ENCODE measurements at regions of chr1 and their contacts with region 1.

Region 1: DNA sequence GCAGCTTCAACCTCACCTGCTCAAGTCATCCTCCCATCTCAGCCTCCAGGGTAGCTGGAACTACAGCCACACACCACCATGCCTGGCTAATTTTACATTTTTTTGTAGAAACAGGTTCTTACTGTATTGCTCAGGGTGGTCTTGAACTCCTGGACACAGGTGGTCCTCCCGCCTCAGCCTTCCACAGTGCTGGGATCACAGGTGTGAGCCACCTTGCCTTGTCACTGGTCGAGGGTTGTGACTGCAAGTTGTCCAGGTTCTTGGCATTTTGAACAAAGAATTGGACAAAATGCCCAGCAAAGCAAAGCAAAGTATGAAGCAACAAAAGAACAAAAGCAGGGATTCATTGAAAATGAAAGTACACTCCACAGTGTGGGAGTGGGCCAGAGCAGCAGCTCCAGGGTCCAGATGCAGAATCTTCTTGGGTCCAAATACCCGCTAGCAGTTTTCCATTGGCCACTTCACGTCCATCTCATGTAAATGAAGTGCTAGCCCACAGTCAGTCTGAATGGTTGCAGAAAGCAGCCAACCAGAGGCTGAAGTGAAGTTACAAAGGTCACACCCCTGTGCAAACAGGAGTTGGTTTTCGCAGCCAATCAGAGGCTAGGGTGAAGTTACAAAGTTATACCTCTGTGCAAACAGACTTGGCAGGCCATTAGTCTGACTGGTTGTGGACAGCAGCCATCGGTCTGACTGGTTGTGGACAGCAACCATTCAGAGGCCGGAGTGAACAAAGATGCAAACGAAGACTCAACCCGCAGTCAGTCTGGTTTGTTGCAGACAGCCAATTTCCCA is 109.5 kb upstream of the KIF26B start:
- DNase-seq: no peak
- ATAC-seq: no peak
- H3K4me3 ChIP-seq: no peak overlapping the region
- H3K4me3 Mint-ChIP-seq: no peak overlapping the region
- H3K27ac ChIP-seq: no peak overlapping the region
- H3K27ac Mint-ChIP-seq: no peak overlapping the region
- H3K4me1 ChIP-seq: no peaks in the 10 kb centered on the region
- H3K4me1 Mint-ChIP-seq: peaks cover 2% of the 10 kb centered on the region
- H3K27me3 ChIP-seq: no peaks in the 10 kb centered on the region
- H3K27me3 Mint-ChIP-seq: no peaks in the 10 kb centered on the region
- CTCF ChIP-seq: no peak

Region 2: GRCh38 chr1:244652699-244653466 is 392.4 kb before region 1 on chr1 and contains the start of gene DESI2:
- CTCF ChIA-PET with region 1: interaction called, 4 read pairs
- POLR2A ChIA-PET with region 1: no interaction called
- intact Hi-C with region 1: loop called in 1 of 2 experiments (anchors 2 kb)
- DNase-seq: peak; percentile 95 to 100 (median 97)
- ATAC-seq: peak; percentile 92
- H3K4me3 ChIP-seq: peak within 1 kb of the TSS; percentile 67 to 95
- H3K4me3 Mint-ChIP-seq: no peak within 1 kb of the TSS
- H3K27ac ChIP-seq: peak within 1 kb of the TSS; percentile 68 to 73
- H3K27ac Mint-ChIP-seq: peak within 1 kb of the TSS; percentile 86
- H3K4me1 ChIP-seq: peaks cover 22% of the 10 kb centered on the region
- H3K4me1 Mint-ChIP-seq: peaks cover 26% of the 10 kb centered on the region
- H3K27me3 ChIP-seq: no peaks in the 10 kb centered on the region
- H3K27me3 Mint-ChIP-seq: no peaks in the 10 kb centered on the region
- CTCF ChIP-seq: peak; percentile 39
- total RNA-seq, gene DESI2: 14.5 to 16.2 TPM

Region 3: GRCh38 chr1:244864253-244865027 is 180.8 kb before region 1 on chr1 and contains the start of gene HNRNPU:
- CTCF ChIA-PET with region 1: interaction called, 11 read pairs
- POLR2A ChIA-PET with region 1: interaction called, 6 read pairs
- intact Hi-C with region 1: loop called (anchors 2 kb)
- DNase-seq: peak; percentile 91 to 99 (median 96)
- ATAC-seq: peak; percentile 63
- H3K4me3 ChIP-seq: peak within 1 kb of the TSS; percentile 85 to 88
- H3K4me3 Mint-ChIP-seq: peak within 1 kb of the TSS; percentile 94
- H3K27ac ChIP-seq: peak within 1 kb of the TSS; percentile 91 to 94
- H3K27ac Mint-ChIP-seq: peak within 1 kb of the TSS; percentile 98
- H3K4me1 ChIP-seq: peaks cover 34% of the 10 kb centered on the region
- H3K4me1 Mint-ChIP-seq: peaks cover 45% of the 10 kb centered on the region
- H3K27me3 ChIP-seq: no peaks in the 10 kb centered on the region
- H3K27me3 Mint-ChIP-seq: no peaks in the 10 kb centered on the region
- CTCF ChIP-seq: no peak
- total RNA-seq, gene HNRNPU: 411 to 415 TPM

Region 4: DNA sequence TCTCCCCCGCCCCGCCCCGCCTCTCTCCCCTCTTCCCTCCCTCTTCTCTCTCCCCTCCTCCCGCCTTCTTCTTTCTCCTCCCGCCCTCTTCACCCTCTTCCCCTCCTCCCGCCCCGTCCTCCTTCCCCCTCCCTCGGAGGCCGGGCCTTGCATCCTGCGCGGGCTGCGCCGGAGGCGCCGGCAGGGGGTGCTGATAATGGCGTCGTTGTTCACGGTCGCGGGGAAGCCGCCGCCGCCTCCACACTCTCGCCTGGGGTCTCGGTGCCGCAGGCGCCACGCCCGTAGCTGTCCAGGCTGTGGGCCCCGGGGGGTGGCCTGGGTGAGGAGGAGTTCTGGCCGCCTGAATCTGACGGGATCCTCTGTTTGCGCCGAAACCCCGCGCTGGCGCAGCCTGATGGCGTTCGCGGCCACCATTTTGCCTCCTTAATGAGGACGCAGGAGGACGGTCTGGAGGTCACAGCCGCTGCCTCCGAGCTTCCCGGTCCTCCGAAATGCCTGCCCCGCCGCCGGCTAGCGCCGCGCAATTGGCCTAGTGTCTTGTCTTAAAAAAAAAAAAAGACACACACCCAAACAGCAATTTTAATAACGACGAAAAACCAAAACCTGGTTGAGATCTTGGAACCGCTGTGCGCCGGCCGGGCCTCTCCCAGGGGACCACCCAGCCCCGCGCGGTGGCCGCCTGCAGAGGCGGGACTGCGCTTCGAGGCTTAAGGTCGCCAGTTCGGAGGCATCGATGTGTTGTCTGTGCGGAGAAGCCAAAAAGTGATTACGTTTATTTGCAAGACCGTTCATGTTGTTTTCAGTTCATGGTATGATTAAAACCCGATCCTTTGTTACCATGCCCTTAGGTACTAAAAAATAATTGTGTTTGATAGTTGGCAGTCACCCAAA is 74.4 kb before region 1 on chr1:
- CTCF ChIA-PET with region 1: interaction called, 7 read pairs
- POLR2A ChIA-PET with region 1: interaction called, 6 read pairs
- intact Hi-C with region 1: loop called (anchors 2 to 5 kb)
- DNase-seq: peak; percentile 86 to 97 (median 93)
- ATAC-seq: peak; percentile 80
- H3K4me3 ChIP-seq: peak overlapping the region; percentile 68 to 70
- H3K4me3 Mint-ChIP-seq: peak overlapping the region; percentile 97
- H3K27ac ChIP-seq: peak overlapping the region; percentile 99 to 100
- H3K27ac Mint-ChIP-seq: peak overlapping the region; percentile 98
- H3K4me1 ChIP-seq: peaks cover 5% of the 10 kb centered on the region
- H3K4me1 Mint-ChIP-seq: peaks cover 19% of the 10 kb centered on the region
- H3K27me3 ChIP-seq: no peaks in the 10 kb centered on the region
- H3K27me3 Mint-ChIP-seq: no peaks in the 10 kb centered on the region
- CTCF ChIP-seq: peak; percentile 54

Region 5: DNA sequence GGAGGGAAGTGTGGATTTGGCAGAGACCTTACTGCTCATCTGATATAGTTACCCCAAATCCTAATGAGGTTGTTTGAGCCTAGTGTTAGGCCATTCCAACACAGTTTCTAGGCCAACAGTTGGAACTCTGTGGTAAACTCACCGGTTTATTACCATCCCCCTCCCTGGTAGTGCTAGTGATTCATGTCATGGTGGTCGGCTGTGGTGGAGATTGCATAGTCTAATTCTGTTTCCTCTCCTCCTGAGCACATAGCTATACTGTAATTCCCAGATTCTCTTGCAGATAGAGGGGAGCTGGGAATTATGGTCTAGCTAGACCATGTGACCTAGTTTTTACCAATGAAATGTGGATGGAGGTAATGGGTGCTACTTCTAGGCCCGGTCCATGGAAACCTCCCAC is 14.2 kb before region 1 on chr1:
- CTCF ChIA-PET with region 1: interaction called, 42 read pairs
- POLR2A ChIA-PET with region 1: no interaction called
- intact Hi-C with region 1: no loop called
- DNase-seq: no peak
- ATAC-seq: no peak
- H3K4me3 ChIP-seq: no peak overlapping the region
- H3K4me3 Mint-ChIP-seq: no peak overlapping the region
- H3K27ac ChIP-seq: no peak overlapping the region
- H3K27ac Mint-ChIP-seq: no peak overlapping the region
- H3K4me1 ChIP-seq: peaks cover 5% of the 10 kb centered on the region
- H3K4me1 Mint-ChIP-seq: peaks cover 5% of the 10 kb centered on the region
- H3K27me3 ChIP-seq: no peaks in the 10 kb centered on the region
- H3K27me3 Mint-ChIP-seq: no peaks in the 10 kb centered on the region
- CTCF ChIP-seq: no peak

Measured in CD8-positive, alpha-beta T cell (primary cell).